SK-N-SH (cell line): ENCODE measurements at regions of chr14 and their contacts with region 1.

Region 1: DNA sequence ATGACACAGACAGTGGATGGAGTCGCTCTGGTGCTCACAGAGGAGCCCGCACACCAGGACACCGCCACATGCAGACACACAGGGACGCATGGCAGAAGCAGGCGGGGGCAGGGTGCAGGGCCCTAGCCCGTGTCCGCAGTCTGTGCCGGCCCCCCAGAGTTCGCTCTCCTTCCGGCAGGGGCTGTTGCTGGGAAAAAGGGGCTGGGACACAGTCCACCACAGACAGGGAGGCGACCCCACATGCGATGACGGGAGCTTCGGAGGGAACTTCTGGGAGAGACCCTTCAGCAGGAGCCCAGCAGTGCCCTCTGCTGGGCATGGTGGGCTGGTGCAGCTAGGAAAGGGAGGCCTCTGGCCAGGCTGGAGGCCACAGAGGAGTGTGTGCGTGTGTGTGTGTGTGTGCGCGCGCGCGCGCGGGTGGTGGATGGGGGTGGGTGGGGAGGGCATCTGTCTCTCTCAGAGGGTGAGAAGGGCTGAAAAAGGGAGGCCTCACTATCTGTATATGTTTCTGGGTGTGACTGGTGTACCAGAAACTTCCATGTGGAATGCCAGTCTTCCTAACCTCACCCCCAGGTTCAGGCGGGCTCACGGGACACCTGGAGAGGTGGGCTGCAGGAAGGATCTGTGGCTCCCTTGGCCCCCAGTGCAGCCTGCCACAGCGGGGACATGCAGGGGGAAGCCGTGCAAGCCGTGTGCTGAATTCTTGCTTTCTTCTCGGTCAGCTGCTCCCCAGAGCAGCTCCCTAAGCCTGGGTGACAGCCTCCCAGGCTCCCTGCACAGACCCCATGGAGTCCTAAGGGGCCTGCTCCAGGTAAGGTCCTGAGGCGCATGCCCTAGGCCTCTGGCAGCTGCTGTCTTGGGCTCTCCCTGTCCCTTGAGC is 60.7 kb downstream of the PLEKHG3 start:
- DNase-seq: peak; percentile 90
- H3K4me3 ChIP-seq: peak overlapping the region; percentile 22 to 56; a peak in 1 of 4 replicates
- H3K27ac ChIP-seq: peak overlapping the region in 1 of 2 experiments; percentile 99; a peak in 2 of 4 replicates
- H3K4me1 ChIP-seq: peaks cover 26 to 56% of the 10 kb centered on the region in 2 experiments
- H3K27me3 ChIP-seq: no peaks in the 10 kb centered on the region
- CTCF ChIP-seq: peak; percentile 81
- EP300 ChIP-seq: no peak
- RAD21 ChIP-seq: peak; percentile 87

Region 2: DNA sequence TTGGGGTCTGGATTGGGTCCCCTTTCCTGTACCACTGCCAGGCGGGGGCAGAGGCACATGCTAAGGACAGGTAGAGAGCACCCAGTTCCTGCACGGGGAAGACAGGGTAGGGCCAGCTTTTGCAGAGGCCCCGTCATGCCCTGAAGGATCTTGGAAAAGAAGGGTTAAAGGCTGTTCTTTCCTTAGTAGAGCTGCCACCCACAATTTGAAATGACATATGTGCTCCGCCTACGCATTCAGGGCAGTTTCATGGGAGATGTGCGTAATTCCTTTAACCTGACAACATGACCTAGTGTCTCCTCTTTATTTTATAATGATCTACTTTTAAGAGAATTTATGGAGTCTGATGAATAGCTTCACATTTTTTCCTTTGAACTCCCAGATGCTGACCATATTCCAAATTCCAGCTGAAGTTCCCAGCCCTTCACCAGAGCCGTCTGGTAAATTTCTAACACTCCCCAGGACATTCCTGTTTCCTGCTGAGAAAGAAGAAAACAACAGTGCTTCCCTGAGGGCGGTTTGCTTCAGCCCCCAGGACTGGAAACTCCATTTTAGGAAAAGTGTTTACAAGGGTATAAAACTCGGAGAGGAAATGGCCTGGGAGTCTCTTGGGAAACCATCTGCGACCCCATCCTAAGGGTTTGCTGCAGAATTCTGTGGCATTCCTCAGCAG is 119.5 kb before region 1 on chr14:
- CTCF ChIA-PET with region 1: interaction called, 14 read pairs
- POLR2A ChIA-PET with region 1: interaction called, 3 read pairs
- DNase-seq: no peak
- H3K4me3 ChIP-seq: peak overlapping the region in 1 of 2 experiments; percentile 21; a peak in 1 of 4 replicates
- H3K27ac ChIP-seq: peak overlapping the region; percentile 57 to 81; a peak in 3 of 4 replicates
- H3K4me1 ChIP-seq: peaks cover 6 to 13% of the 10 kb centered on the region in 2 experiments; a peak in 2 of 4 replicates
- H3K27me3 ChIP-seq: no peaks in the 10 kb centered on the region
- CTCF ChIP-seq: no peak
- EP300 ChIP-seq: peak in 1 of 2 experiments; percentile 55; a peak in 1 of 4 replicates
- RAD21 ChIP-seq: no peak

Region 3: DNA sequence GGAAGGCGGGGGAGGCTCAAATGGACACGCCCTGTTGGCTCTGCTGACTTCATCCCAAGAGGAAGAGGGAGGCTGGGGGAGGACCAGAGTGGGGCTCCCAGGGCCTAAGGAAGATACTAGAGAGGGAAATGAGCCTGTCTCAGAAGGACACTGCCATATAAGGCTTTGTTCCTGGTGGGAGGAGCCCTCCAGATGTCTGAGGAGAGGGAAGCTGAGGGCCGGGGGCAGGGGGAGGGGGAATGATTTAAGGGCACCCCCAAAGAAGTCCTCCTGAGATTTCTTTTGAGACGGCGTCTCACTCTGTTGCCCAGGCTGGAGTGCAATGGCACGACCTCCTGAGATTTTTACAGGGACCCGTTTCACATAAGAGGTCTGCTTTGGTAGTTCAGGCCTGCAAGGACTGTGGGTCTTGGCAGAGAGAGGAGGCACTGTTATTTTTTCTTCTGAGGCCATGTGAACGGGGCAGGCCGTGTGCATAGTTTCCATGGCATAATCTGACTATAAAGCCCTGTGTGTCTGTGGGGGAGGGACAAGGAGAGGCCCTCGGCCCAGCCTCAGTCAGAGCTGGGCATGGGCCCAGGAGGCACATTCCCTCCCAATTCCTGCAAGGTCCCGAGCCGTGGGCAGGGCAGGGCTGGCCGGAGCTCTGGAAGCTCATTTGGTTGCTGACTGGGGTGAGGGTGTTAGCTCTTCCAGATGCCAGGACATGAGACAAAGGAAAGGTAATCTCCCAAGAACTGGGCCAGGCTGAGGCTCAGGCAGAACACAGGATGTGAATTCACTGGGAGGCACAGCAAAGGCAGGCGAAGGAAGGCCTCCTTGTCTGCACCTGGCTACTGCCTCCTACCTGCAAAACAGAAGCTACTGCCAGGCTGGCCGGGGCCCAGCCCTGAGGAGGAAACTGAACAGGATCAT is 82.8 kb before region 1 on chr14:
- CTCF ChIA-PET with region 1: interaction called, 16 read pairs
- POLR2A ChIA-PET with region 1: interaction called, 4 read pairs
- DNase-seq: no peak
- H3K4me3 ChIP-seq: no peak overlapping the region
- H3K27ac ChIP-seq: peak overlapping the region in 1 of 2 experiments; percentile 18; a peak in 1 of 4 replicates
- H3K4me1 ChIP-seq: peaks cover 0 to 5% of the 10 kb centered on the region in 2 experiments; a peak in 1 of 4 replicates
- H3K27me3 ChIP-seq: no peaks in the 10 kb centered on the region
- CTCF ChIP-seq: no peak
- EP300 ChIP-seq: no peak
- RAD21 ChIP-seq: no peak

Region 4: GRCh38 chr14:64720131-64720576 is 44.7 kb before region 1 on chr14:
- CTCF ChIA-PET with region 1: interaction called, 11 read pairs
- POLR2A ChIA-PET with region 1: no interaction called
- DNase-seq: no peak
- H3K4me3 ChIP-seq: no peak overlapping the region
- H3K27ac ChIP-seq: no peak overlapping the region
- H3K4me1 ChIP-seq: peaks cover 16 to 17% of the 10 kb centered on the region in 2 experiments; a peak in 2 of 4 replicates
- H3K27me3 ChIP-seq: no peaks in the 10 kb centered on the region
- CTCF ChIP-seq: no peak
- EP300 ChIP-seq: no peak
- RAD21 ChIP-seq: no peak

Region 5: GRCh38 chr14:64778104-64778754 is 13.3 kb after region 1 on chr14:
- CTCF ChIA-PET with region 1: interaction called, 23 read pairs
- POLR2A ChIA-PET with region 1: no interaction called
- DNase-seq: no peak
- H3K4me3 ChIP-seq: no peak overlapping the region
- H3K27ac ChIP-seq: no peak overlapping the region
- H3K4me1 ChIP-seq: peaks cover 0 to 6% of the 10 kb centered on the region in 2 experiments; a peak in 1 of 4 replicates
- H3K27me3 ChIP-seq: no peaks in the 10 kb centered on the region
- CTCF ChIP-seq: no peak
- EP300 ChIP-seq: no peak
- RAD21 ChIP-seq: no peak

Region 6: GRCh38 chr14:64807551-64807950 is 42.7 kb after region 1 on chr14:
- CTCF ChIA-PET with region 1: no interaction called
- POLR2A ChIA-PET with region 1: no interaction called
- DNase-seq: no peak
- H3K4me3 ChIP-seq: no peak overlapping the region
- H3K27ac ChIP-seq: peak overlapping the region in 1 of 2 experiments; percentile 100; a peak in 3 of 4 replicates
- H3K4me1 ChIP-seq: peaks cover 5 to 26% of the 10 kb centered on the region in 2 experiments
- H3K27me3 ChIP-seq: no peaks in the 10 kb centered on the region
- CTCF ChIP-seq: no peak
- EP300 ChIP-seq: no peak
- RAD21 ChIP-seq: no peak